CD4-positive, alpha-beta memory T cell (primary cell): ENCODE measurements at regions of chr16 and their contacts with region 1.

Region 1: DNA sequence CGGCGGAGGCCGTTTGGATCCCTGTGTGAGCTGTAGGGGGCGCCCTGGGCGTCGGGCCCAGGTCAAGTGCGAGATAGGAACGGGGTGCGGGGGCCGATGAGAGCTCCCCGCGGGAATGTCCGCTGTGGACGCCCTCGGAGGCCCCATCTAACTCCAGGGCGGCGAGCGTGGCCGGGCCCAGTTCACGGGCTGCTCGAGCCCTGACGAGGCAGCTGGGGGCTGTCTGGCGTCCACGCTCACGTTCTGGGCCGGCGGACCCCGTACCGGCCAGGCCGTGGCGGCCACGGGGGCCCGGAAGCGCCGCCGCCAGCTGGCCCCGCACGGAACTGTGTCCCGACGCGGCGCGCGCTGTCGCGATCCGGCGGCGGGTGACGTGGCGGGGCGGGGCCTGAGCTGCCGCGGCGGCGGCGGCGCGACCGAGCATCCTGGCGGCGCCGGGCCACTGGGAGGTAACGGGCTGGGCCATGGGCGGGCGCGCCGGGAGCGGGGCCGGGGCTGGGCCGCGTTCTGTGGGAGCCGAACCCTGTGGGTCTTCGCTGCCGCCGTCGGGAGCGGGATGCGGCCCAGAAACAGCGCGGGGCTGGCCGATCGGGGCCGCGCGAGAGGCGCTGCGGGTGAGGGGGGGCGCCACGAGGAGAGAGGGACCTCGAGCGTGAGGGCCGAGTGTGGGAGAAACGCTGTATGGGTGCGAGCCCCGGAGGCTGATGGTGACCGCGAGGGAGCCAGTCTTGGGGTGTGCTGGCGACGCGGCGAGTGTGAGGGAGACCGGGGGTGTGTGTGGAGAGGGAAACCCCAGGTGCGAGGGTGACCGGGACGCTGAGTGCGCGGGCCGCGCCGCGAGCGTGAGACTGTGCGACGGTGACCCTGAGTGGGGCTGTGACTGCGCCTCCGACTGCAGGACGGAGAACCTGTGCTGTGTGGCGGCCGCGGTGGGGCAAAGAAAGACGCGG is at the start of gene SLC7A6:
- DNase-seq: peak; percentile 79 to 86 (median 85)
- H3K4me3 ChIP-seq: peak within 1 kb of the TSS; percentile 68 to 93
- H3K4me3 Mint-ChIP-seq: peak within 1 kb of the TSS; percentile 94 to 99 (median 97)
- H3K27ac ChIP-seq: peak within 1 kb of the TSS; percentile 97
- H3K27ac Mint-ChIP-seq: peak within 1 kb of the TSS; percentile 98 to 100 (median 99)
- H3K4me1 ChIP-seq: peaks cover 58% of the 10 kb centered on the region
- H3K4me1 Mint-ChIP-seq: peaks cover 30 to 67% (median 50%) of the 10 kb centered on the region in 4 donors
- H3K27me3 ChIP-seq: no peaks in the 10 kb centered on the region
- H3K27me3 Mint-ChIP-seq: no peaks in the 10 kb centered on the region
- total RNA-seq, gene SLC7A6: 190 to 194 TPM

Region 2: DNA sequence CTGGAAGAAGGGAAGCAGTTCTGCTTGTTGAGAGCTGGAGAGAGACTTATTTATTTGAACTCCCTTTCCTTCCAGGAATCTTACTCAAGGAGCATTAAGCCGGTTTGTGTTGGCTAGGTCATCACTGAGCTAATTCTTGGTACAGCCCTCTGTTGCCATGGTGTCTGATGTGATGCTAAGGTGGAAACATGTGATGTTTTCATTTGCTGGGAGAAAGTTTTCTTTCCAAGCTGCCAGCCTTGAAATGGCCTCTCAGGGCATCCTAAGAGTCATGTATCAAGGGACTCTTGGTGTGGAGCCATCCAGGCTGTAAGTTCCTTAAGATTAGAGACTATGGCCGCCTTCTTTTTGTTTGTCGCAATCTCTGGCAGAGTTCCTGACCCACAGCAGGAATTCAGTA is 367.2 kb before region 1 on chr16:
- CTCF ChIA-PET with region 1: no interaction called
- POLR2A ChIA-PET with region 1: no interaction called
- intact Hi-C with region 1: no loop called
- DNase-seq: no peak
- H3K4me3 ChIP-seq: no peak overlapping the region
- H3K4me3 Mint-ChIP-seq: peak overlapping the region in 2 of 8 donors; percentile 12 to 18
- H3K27ac ChIP-seq: no peak overlapping the region
- H3K27ac Mint-ChIP-seq: peak overlapping the region in 3 of 7 donors; percentile 1 to 57 (median 5)
- H3K4me1 ChIP-seq: peaks cover 19% of the 10 kb centered on the region
- H3K4me1 Mint-ChIP-seq: peaks cover 12 to 58% (median 43%) of the 10 kb centered on the region in 4 donors
- H3K27me3 ChIP-seq: no peaks in the 10 kb centered on the region
- H3K27me3 Mint-ChIP-seq: no peaks in the 10 kb centered on the region

Region 3: DNA sequence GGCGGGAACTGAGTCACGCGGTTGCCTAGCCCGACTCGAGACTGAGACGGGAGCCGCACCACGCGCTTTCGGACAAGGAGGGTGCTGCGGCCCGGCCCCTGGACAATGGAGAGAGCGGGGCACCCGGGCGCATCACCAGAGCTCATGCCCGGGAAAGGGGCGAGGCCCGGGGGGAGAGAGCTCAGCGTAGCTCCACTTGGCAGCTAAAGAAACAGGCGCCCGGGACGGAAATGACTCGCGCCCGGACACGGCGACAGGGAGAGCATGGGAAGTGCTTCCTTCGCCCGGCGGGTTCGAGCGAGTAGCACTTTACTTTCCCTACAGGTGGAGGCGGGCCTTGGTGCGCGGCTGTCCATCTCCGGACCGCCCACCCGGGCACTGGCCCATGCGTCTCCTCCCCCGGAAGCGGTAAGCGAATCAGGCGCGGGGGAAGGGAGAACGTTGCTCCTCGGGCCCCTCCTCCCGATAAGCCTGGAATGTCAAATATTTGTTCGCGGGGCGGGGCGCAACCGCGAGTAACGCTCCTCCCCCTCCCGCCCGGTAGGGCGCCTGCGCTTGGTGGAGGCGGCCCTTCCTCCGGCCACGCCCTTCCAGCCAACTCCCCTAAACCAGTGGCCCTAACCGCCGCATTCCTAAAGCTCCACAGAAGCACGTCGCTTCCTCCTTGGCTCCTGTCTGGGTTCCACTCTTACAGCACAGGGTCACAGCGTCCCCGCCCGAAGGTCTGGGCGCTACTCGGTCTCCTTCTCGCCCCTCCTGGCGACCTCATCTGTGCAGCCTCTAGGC is 27.0 kb before region 1 on chr16:
- CTCF ChIA-PET with region 1: interaction called, 20 read pairs
- POLR2A ChIA-PET with region 1: interaction called, 13 read pairs
- intact Hi-C with region 1: no loop called
- DNase-seq: peak; percentile 83 to 90 (median 84)
- H3K4me3 ChIP-seq: peak overlapping the region; percentile 42 to 70
- H3K4me3 Mint-ChIP-seq: peak overlapping the region; percentile 88 to 98 (median 95)
- H3K27ac ChIP-seq: peak overlapping the region; percentile 44
- H3K27ac Mint-ChIP-seq: peak overlapping the region; percentile 90 to 97 (median 94)
- H3K4me1 ChIP-seq: peaks cover 30% of the 10 kb centered on the region
- H3K4me1 Mint-ChIP-seq: peaks cover 16 to 52% (median 34%) of the 10 kb centered on the region in 4 donors
- H3K27me3 ChIP-seq: no peaks in the 10 kb centered on the region
- H3K27me3 Mint-ChIP-seq: no peaks in the 10 kb centered on the region

Region 4: GRCh38 chr16:68251832-68252231 is 12.6 kb before region 1 on chr16:
- CTCF ChIA-PET with region 1: interaction called, 34 read pairs
- POLR2A ChIA-PET with region 1: interaction called, 30 read pairs
- intact Hi-C with region 1: no loop called
- DNase-seq: no peak
- H3K4me3 ChIP-seq: no peak overlapping the region
- H3K4me3 Mint-ChIP-seq: no peak overlapping the region
- H3K27ac ChIP-seq: no peak overlapping the region
- H3K27ac Mint-ChIP-seq: no peak overlapping the region
- H3K4me1 ChIP-seq: peaks cover 5% of the 10 kb centered on the region
- H3K4me1 Mint-ChIP-seq: peaks cover 0 to 8% (median 2%) of the 10 kb centered on the region in 4 donors
- H3K27me3 ChIP-seq: no peaks in the 10 kb centered on the region
- H3K27me3 Mint-ChIP-seq: no peaks in the 10 kb centered on the region

Region 5: DNA sequence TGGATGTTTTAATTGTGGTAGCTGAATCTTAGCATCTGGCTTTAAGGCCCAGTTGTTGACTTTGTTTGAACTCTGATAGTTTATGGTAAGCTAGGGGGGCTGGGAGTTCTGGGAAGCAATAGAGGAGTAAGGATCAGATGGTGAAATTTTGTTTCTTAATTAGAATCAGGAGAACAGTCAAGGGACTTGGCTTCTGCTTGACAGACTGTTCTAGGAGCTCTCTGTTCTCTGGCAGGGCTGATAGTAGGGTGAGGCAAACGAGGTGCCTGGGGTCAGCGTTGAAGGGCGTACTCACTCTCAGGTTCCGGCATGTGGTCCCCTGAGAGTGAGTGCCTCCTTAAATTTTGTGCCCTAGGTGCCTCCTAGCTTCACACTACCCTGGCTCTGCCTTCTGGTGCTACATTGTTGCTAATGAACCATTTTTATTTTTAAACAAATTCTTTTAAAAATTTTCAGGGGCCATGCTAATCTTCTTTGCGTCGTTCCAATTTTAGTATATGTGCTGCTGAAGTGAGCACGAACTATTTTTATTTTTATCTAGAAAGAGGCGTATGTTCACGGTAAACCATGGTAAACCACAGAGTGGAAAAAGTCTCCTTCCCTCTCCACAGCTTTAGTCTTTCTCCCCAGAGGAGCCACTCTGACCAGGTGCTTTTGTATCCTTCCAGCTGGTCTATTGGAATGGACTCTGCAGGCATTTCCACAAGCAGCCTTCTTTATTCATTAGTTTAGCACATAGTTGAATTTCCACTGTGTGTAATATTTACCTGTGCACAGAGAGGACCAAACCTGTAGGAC is 19.6 kb after region 1 on chr16:
- CTCF ChIA-PET with region 1: interaction called, 680 read pairs
- POLR2A ChIA-PET with region 1: interaction called, 1,508 read pairs
- intact Hi-C with region 1: loop called (anchors 1 kb)
- DNase-seq: no peak
- H3K4me3 ChIP-seq: peak overlapping the region in 1 of 2 donors; percentile 57
- H3K4me3 Mint-ChIP-seq: peak overlapping the region; percentile 71 to 91 (median 87)
- H3K27ac ChIP-seq: peak overlapping the region; percentile 54
- H3K27ac Mint-ChIP-seq: peak overlapping the region; percentile 82 to 94 (median 91)
- H3K4me1 ChIP-seq: peaks cover 100% of the 10 kb centered on the region
- H3K4me1 Mint-ChIP-seq: peaks cover 65 to 97% (median 84%) of the 10 kb centered on the region in 4 donors
- H3K27me3 ChIP-seq: no peaks in the 10 kb centered on the region
- H3K27me3 Mint-ChIP-seq: no peaks in the 10 kb centered on the region

Region 6: DNA sequence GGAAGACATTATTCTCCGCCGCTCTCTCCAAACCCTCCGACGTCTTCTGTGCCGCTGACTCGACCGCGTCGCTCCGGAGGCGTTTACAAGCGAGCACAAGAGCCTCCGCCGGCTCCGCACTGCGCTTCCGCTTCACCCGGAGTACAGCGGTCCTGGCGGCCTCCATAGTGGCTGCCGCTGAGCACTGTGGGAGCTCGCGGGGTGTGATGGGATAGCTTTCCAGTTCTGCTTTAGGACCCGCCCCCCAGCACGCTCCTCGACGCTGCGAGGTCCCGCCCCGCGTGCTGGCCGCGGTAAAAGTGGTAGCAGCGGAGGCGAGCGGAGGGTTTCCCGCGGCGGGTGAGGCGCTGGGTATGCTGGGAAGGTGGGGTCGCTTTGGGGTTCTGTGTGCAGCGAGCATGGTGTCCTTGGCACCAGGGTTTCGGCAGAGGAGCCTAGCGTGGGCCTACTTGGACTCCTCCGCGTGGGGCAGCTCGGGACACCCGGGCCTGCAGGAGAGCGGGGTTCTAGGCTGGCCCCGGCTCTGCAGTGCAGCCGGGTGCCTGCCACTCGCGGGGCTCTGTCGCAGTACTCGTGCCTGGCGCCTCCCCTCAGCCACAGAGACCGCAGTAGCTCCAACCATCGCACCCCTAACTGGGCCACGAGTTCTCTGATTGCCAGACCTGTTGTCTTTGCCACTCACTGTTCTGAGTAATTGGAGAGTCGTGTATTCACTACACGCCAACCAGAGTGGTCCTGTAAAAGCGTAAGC is 46.5 kb after region 1 on chr16 and contains the starts of genes PRMT7 and SLC7A6OS:
- CTCF ChIA-PET with region 1: interaction called, 680 read pairs
- POLR2A ChIA-PET with region 1: interaction called, 1,508 read pairs
- intact Hi-C with region 1: loop called (anchors 1 kb)
- DNase-seq: peak; percentile 90 to 96 (median 92)
- H3K4me3 ChIP-seq: peak within 1 kb of the TSS; percentile 91 to 95
- H3K4me3 Mint-ChIP-seq: peak within 1 kb of the TSS; percentile 96 to 99 (median 98)
- H3K27ac ChIP-seq: peak within 1 kb of the TSS; percentile 77
- H3K27ac Mint-ChIP-seq: peak within 1 kb of the TSS; percentile 75 to 98 (median 96)
- H3K4me1 ChIP-seq: peaks cover 54% of the 10 kb centered on the region
- H3K4me1 Mint-ChIP-seq: peaks cover 27 to 65% (median 46%) of the 10 kb centered on the region in 4 donors
- H3K27me3 ChIP-seq: no peaks in the 10 kb centered on the region
- H3K27me3 Mint-ChIP-seq: no peaks in the 10 kb centered on the region
- total RNA-seq, gene PRMT7: 98.4 to 104 TPM
- total RNA-seq, gene SLC7A6OS: 51.9 to 55.8 TPM

Region 7: GRCh38 chr16:68512183-68512582 is 247.8 kb after region 1 on chr16:
- CTCF ChIA-PET with region 1: interaction called, 5 read pairs
- POLR2A ChIA-PET with region 1: no interaction called
- intact Hi-C with region 1: loop called (anchors 1 kb)
- DNase-seq: no peak
- H3K4me3 ChIP-seq: no peak overlapping the region
- H3K4me3 Mint-ChIP-seq: no peak overlapping the region
- H3K27ac ChIP-seq: no peak overlapping the region
- H3K27ac Mint-ChIP-seq: peak overlapping the region in 3 of 7 donors; percentile 27 to 72 (median 64)
- H3K4me1 ChIP-seq: peaks cover 7% of the 10 kb centered on the region
- H3K4me1 Mint-ChIP-seq: peaks cover 0 to 4% (median 2%) of the 10 kb centered on the region in 4 donors
- H3K27me3 ChIP-seq: no peaks in the 10 kb centered on the region
- H3K27me3 Mint-ChIP-seq: no peaks in the 10 kb centered on the region